Activated T-helper 1 cell treated with anti-CD3 and anti-CD28 coated beads, Interleukin-12 subunit alpha, Interleukin-12 subunit beta, Interleukin-2, Interleukin-4 antibody, amounts not matched to agents 30 ng/mL and 10 ng/mL and 1 ng/mL, durations not matched to agents 14 hours and 24 hours and 36 hours (primary cell): ENCODE measurements at regions of chr4 and their contacts with region 1.

Region 1: GRCh38 chr4:118835571-118836300 is at the start of gene SEC24D:
- DNase-seq: peak; percentile 87
- H3K4me3 Mint-ChIP-seq: peak within 1 kb of the TSS; percentile 99
- H3K27ac Mint-ChIP-seq: peak within 1 kb of the TSS; percentile 99
- H3K4me1 Mint-ChIP-seq: peaks cover 34% of the 10 kb centered on the region
- H3K27me3 Mint-ChIP-seq: no peaks in the 10 kb centered on the region
- total RNA-seq, gene SEC24D: 50.0 and 55.2 TPM in 2 replicates

Region 2: GRCh38 chr4:117700111-117700892 is 1135.4 kb before region 1 on chr4:
- intact Hi-C with region 1: no loop called
- DNase-seq: no peak
- H3K4me3 Mint-ChIP-seq: no peak overlapping the region
- H3K27ac Mint-ChIP-seq: no peak overlapping the region
- H3K4me1 Mint-ChIP-seq: no peaks in the 10 kb centered on the region
- H3K27me3 Mint-ChIP-seq: no peaks in the 10 kb centered on the region

Region 3: DNA sequence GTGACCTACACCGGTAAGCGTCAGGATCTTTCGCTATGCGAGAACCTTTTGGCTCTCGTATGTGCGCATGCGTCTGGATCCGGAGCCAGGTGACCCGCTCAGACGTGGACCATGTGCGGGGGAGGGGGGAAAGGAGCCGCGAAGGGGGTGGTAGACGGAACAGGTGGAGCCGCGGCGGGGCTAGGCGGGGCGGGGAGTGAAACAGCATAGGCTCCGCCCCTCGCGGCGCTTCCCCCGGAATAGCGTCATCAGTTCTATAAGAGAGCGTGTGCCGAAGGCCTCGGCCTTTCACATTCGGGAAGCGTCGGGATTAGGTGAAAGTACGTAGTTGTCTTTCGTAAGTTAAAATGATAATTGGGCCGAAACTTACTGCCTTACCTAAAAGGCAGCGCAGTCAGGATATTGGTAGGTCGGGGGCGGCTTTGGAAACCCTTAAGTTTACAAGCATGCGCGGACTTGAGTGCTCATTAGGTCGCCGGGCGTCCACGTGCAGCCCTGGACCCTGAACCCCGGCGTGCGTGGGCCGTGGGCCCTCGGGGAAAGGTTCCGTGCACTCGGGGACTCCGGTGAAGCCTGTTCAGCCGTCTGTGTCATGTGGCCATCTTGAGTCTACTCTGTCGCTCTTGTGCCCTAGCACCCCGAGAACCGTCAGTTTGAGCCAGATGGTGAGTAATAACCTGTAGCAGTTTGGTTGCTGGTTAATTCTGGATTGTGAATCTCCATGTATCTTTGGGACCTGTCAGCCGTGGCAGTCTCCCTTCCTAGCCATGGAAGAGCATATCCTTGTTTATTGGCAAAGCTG is 557.1 kb before region 1 on chr4:
- intact Hi-C with region 1: loop called (anchors 1 kb)
- DNase-seq: peak; percentile 94
- H3K4me3 Mint-ChIP-seq: peak overlapping the region; percentile 88
- H3K27ac Mint-ChIP-seq: peak overlapping the region; percentile 92
- H3K4me1 Mint-ChIP-seq: peaks cover 44% of the 10 kb centered on the region
- H3K27me3 Mint-ChIP-seq: peaks cover 2% of the 10 kb centered on the region

Region 4: GRCh38 chr4:118718511-118719170 is 117.1 kb before region 1 on chr4:
- intact Hi-C with region 1: no loop called
- DNase-seq: no peak
- H3K4me3 Mint-ChIP-seq: no peak overlapping the region
- H3K27ac Mint-ChIP-seq: peak overlapping the region; percentile 6
- H3K4me1 Mint-ChIP-seq: no peaks in the 10 kb centered on the region
- H3K27me3 Mint-ChIP-seq: no peaks in the 10 kb centered on the region

Region 5: DNA sequence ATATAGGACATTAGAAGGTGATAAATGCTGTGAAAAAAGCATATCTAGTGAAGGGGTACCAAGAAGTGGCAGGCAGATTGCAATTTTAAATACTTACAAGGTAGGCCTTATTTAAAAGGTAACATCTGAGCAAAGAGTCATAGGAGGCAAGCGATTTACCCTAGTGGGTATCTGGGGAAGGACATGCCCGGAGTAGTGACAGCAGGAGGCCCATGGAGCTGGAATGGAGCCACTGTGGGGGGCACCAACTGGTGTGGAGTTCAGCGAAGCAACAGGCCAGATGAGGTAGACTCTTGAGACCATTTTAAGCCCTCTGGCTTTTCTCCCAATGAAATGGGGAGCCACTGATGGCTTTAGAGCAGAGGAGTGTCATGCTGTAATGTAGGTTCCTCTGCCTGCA is 37.1 kb before region 1 on chr4:
- intact Hi-C with region 1: loop called (anchors 5 kb)
- DNase-seq: no peak
- H3K4me3 Mint-ChIP-seq: no peak overlapping the region
- H3K27ac Mint-ChIP-seq: no peak overlapping the region
- H3K4me1 Mint-ChIP-seq: peaks cover 4% of the 10 kb centered on the region
- H3K27me3 Mint-ChIP-seq: no peaks in the 10 kb centered on the region

Region 6: GRCh38 chr4:118850488-118851173 is 14.9 kb after region 1 on chr4:
- intact Hi-C with region 1: loop called (anchors 1 kb)
- DNase-seq: peak; percentile 41
- H3K4me3 Mint-ChIP-seq: peak overlapping the region; percentile 96
- H3K27ac Mint-ChIP-seq: peak overlapping the region; percentile 92
- H3K4me1 Mint-ChIP-seq: peaks cover 31% of the 10 kb centered on the region
- H3K27me3 Mint-ChIP-seq: peaks cover 5% of the 10 kb centered on the region

Region 7: DNA sequence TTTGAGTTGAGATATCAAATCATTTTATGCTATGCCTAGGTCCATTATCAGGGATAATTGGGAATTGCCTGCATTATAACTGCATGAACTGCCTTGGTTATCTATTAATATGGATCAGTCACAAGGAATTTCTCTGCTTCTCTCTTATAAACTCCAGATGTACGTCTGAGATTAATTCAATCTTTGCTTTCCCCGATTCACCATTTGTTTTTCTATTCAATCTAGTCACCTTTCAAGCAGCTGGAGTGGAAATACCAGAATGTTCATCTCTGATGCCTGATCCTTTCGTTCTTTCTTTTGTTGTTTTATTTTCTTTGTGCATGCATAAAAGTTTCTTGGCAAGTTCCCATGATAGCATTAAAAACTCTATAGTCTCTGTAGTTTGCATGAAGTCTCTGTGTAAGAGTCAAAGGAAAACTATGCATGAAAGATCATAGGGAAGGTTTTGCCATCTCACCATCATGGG is 75.5 kb after region 1 on chr4:
- intact Hi-C with region 1: no loop called
- DNase-seq: no peak
- H3K4me3 Mint-ChIP-seq: no peak overlapping the region
- H3K27ac Mint-ChIP-seq: no peak overlapping the region
- H3K4me1 Mint-ChIP-seq: no peaks in the 10 kb centered on the region
- H3K27me3 Mint-ChIP-seq: peaks cover 18% of the 10 kb centered on the region

Region 8: DNA sequence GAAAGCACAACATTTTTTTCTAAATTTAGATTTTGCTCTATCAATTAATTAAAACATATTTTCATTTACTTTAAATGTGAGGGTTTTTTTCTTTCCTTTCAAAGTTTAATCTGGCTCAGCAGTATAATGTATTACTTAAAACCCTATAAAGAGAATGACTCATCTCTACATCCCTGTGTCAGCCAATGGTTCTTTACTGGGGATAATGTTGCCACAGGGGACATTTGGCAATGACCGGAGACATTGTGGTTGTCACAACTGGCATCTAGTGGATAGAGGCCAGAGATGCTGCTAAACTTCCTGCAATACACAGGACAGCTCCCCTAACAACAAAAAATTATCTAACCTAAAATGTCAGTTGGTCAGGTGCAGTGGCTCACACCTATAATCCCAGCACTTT is 106.7 kb after region 1 on chr4:
- intact Hi-C with region 1: no loop called
- DNase-seq: no peak
- H3K4me3 Mint-ChIP-seq: no peak overlapping the region
- H3K27ac Mint-ChIP-seq: no peak overlapping the region
- H3K4me1 Mint-ChIP-seq: no peaks in the 10 kb centered on the region
- H3K27me3 Mint-ChIP-seq: peaks cover 10% of the 10 kb centered on the region

Region 9: DNA sequence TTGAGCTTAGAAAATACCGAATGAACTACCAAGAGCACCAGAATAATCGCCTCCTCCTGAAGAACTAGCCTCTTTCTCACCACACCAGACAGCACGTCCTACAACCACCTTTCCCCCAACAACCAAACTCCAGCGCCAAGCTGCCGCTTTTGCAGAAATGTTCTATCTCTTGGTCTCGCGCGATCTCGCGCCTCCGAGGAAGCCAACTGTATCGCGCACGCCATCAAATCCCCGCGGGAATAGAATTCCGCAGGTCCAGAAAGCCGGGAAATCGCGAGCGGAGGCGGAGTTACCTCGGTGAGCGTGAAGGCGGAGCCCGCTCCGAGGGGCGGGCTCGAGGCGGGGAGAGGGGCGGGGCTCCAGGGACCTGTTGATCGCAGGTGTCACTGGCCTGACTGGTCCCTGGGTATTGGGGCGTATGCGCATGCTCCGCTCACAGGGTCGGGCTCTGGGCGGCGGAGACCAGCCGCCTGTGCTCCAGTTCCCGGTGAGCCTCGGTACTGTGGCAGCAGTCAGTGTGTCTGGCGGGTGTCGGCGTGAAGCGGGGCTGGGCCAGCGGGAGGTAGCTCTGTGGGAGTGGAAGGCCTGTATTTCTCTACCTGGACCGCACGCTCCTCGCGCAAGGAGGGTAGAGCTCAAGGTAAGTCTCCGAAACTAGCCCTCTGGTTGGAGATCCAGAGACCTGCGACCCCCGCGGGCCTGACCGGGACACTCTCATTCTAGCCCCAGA is 376.7 kb after region 1 on chr4 and contains the start of gene USP53:
- intact Hi-C with region 1: loop called (anchors 2 kb)
- DNase-seq: peak; percentile 90
- H3K4me3 Mint-ChIP-seq: peak within 1 kb of the TSS; percentile 95
- H3K27ac Mint-ChIP-seq: peak within 1 kb of the TSS; percentile 95
- H3K4me1 Mint-ChIP-seq: peaks cover 39% of the 10 kb centered on the region
- H3K27me3 Mint-ChIP-seq: peaks cover 5% of the 10 kb centered on the region
- total RNA-seq, gene USP53: 6.1 and 8.5 TPM in 2 replicates